ENCODE measurements at regions of chr17 and their contacts with region 1.

Region 1: DNA sequence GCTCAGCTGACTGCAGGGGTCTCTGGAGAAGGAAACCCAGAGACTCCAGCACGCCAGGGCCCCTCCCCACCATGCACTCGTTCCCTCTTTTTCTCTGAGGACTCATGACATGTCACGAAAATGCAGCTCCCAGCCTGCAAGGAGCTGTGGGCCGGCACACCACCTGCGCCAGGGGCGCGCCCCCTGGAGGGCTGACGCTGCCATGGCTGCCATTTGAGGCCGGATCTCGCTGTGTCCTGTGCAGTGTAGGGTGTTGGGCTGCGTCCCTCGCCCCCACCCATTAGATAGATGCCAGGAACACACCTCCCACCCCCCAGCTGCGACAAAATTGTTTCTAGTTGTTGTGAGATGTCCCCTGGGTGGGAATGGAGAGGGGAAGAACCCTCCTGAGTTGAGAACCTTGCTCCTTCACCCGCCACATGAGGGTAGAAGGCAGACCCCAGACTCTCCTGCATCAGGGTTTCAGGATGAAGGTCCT is 8.2 kb downstream of the SYNGR2 start:
- DNase-seq: peak; percentile 68 to 77 (median 72)
- H3K4me3 ChIP-seq: no peak overlapping the region
- H3K4me3 Mint-ChIP-seq: no peak overlapping the region
- H3K27ac ChIP-seq: no peak overlapping the region
- H3K27ac Mint-ChIP-seq: peak overlapping the region in 1 of 7 donors; percentile 8
- H3K4me1 ChIP-seq: peaks cover 35% of the 10 kb centered on the region
- H3K4me1 Mint-ChIP-seq: peaks cover 24 to 49% (median 38%) of the 10 kb centered on the region in 4 donors
- H3K27me3 ChIP-seq: no peaks in the 10 kb centered on the region
- H3K27me3 Mint-ChIP-seq: no peaks in the 10 kb centered on the region

Region 2: GRCh38 chr17:77892469-77893143 is 284.0 kb before region 1 on chr17:
- CTCF ChIA-PET with region 1: no interaction called
- POLR2A ChIA-PET with region 1: no interaction called
- intact Hi-C with region 1: no loop called
- DNase-seq: peak in 1 of 5 donors; percentile 33
- H3K4me3 ChIP-seq: no peak overlapping the region
- H3K4me3 Mint-ChIP-seq: no peak overlapping the region
- H3K27ac ChIP-seq: no peak overlapping the region
- H3K27ac Mint-ChIP-seq: no peak overlapping the region
- H3K4me1 ChIP-seq: peaks cover 6% of the 10 kb centered on the region
- H3K4me1 Mint-ChIP-seq: peaks cover 9 to 15% (median 12%) of the 10 kb centered on the region in 4 donors
- H3K27me3 ChIP-seq: no peaks in the 10 kb centered on the region
- H3K27me3 Mint-ChIP-seq: no peaks in the 10 kb centered on the region

Region 3: DNA sequence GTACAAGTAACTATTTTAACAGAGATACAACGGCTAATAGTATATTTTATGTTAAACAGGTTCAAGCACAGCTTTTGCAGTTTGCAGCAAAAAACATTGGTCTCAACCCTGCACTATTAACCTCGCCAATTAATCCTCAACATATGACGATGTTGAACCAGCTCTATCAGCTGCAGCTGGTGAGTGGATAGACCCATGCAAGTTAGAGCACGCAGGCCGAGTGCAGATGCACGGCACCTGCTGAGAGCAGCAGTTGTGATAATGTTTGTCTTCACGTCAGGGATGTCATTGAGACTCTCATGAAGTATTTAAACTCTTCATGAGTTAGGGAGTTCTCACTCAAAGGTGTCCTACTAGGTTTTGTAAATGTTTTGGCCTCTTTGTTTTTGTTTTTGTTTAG is 93.6 kb before region 1 on chr17:
- CTCF ChIA-PET with region 1: interaction called, 62 read pairs
- POLR2A ChIA-PET with region 1: interaction called, 4 read pairs
- intact Hi-C with region 1: loop called (anchors 1 kb)
- DNase-seq: no peak
- H3K4me3 ChIP-seq: no peak overlapping the region
- H3K4me3 Mint-ChIP-seq: no peak overlapping the region
- H3K27ac ChIP-seq: no peak overlapping the region
- H3K27ac Mint-ChIP-seq: peak overlapping the region in 1 of 7 donors; percentile 69
- H3K4me1 ChIP-seq: no peaks in the 10 kb centered on the region
- H3K4me1 Mint-ChIP-seq: peaks cover 0 to 2% (median 0%) of the 10 kb centered on the region in 4 donors
- H3K27me3 ChIP-seq: no peaks in the 10 kb centered on the region
- H3K27me3 Mint-ChIP-seq: no peaks in the 10 kb centered on the region

Region 4: GRCh38 chr17:78112518-78113226 is 63.9 kb before region 1 on chr17:
- CTCF ChIA-PET with region 1: interaction called, 36 read pairs
- POLR2A ChIA-PET with region 1: interaction called, 12 read pairs
- intact Hi-C with region 1: loop called (anchors 1 kb)
- DNase-seq: peak; percentile 68 to 79 (median 72)
- H3K4me3 ChIP-seq: no peak overlapping the region
- H3K4me3 Mint-ChIP-seq: peak overlapping the region in 4 of 8 donors; percentile 43 to 59 (median 53)
- H3K27ac ChIP-seq: peak overlapping the region; percentile 35
- H3K27ac Mint-ChIP-seq: peak overlapping the region; percentile 81 to 96 (median 93)
- H3K4me1 ChIP-seq: peaks cover 47% of the 10 kb centered on the region
- H3K4me1 Mint-ChIP-seq: peaks cover 25 to 51% (median 36%) of the 10 kb centered on the region in 4 donors
- H3K27me3 ChIP-seq: no peaks in the 10 kb centered on the region
- H3K27me3 Mint-ChIP-seq: no peaks in the 10 kb centered on the region

Region 5: GRCh38 chr17:78128551-78129350 is 47.8 kb before region 1 on chr17 and contains the start of gene TMC6:
- CTCF ChIA-PET with region 1: interaction called, 57 read pairs
- POLR2A ChIA-PET with region 1: interaction called, 170 read pairs
- intact Hi-C with region 1: no loop called
- DNase-seq: peak; percentile 80 to 91 (median 81)
- H3K4me3 ChIP-seq: peak within 1 kb of the TSS; percentile 97 to 99
- H3K4me3 Mint-ChIP-seq: peak within 1 kb of the TSS; percentile 95 to 100 (median 99)
- H3K27ac ChIP-seq: peak within 1 kb of the TSS; percentile 81
- H3K27ac Mint-ChIP-seq: peak within 1 kb of the TSS; percentile 95 to 99 (median 98)
- H3K4me1 ChIP-seq: peaks cover 64% of the 10 kb centered on the region
- H3K4me1 Mint-ChIP-seq: peaks cover 18 to 78% (median 34%) of the 10 kb centered on the region in 4 donors
- H3K27me3 ChIP-seq: no peaks in the 10 kb centered on the region
- H3K27me3 Mint-ChIP-seq: no peaks in the 10 kb centered on the region
- total RNA-seq, gene TMC6: 697 to 702 TPM

Region 6: DNA sequence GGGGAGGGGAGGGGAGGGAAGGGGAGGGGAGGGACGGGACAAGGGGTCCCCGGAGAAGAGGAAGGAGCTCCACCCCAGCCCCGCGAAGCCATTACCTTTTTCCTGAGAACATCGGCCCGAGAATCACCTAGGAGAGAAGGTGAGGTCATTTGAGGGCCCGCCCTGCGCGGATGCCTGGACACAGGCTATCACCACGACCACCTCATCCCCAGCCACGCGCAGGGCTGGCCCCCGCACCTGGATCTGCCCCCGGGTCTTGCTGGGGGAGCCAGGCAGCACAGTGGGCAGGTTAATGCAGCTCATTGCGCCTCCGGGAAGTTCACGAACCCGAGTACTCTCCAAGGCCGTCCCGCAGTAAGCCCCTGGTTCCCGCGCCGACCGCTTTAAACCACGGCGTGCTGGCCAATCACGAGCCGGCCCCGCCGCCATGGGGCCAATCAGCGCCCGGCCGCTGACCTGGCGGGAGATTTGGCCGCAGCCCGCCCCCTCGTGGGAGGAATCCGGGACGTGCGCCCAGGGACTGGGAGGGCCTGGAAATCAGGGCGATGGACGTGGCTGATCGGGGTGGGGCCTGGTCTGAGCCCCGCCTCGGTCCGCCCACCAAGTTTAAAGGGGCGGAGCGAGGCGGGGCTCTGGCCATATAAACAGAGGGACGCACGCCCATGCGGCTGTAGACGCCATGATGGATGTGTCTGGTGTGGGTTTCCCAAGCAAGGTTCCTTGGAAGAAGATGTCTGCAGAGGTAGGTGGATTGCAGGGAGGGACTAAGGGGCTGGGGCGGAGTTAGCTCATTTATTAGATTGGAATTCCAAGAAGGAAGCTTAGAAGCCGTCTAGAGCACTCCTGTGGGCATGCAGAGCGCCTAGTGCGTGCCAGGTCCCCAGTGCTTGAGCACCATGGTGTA is 10.4 kb after region 1 on chr17 and contains the starts of genes AFMID and TK1:
- CTCF ChIA-PET with region 1: interaction called, 17 read pairs
- POLR2A ChIA-PET with region 1: interaction called, 3 read pairs
- intact Hi-C with region 1: no loop called
- DNase-seq: peak; percentile 64 to 78 (median 71)
- H3K4me3 ChIP-seq: peak within 1 kb of the TSS; percentile 55 to 75
- H3K4me3 Mint-ChIP-seq: peak within 1 kb of the TSS; percentile 81 to 90 (median 87)
- H3K27ac ChIP-seq: no peak within 1 kb of the TSS
- H3K27ac Mint-ChIP-seq: peak within 1 kb of the TSS in 6 of 7 donors; percentile 20 to 82 (median 65)
- H3K4me1 ChIP-seq: peaks cover 14% of the 10 kb centered on the region
- H3K4me1 Mint-ChIP-seq: peaks cover 4 to 16% (median 9%) of the 10 kb centered on the region in 4 donors
- H3K27me3 ChIP-seq: no peaks in the 10 kb centered on the region
- H3K27me3 Mint-ChIP-seq: no peaks in the 10 kb centered on the region
- total RNA-seq, gene AFMID: 3.6 to 3.8 TPM
- total RNA-seq, gene TK1: 0.55 TPM in 1 of 2 experiments, not detected in the other

Measured in CD4-positive, alpha-beta memory T cell (primary cell).